GM12878 (cell line): ENCODE measurements at regions of chr9 and their contacts with region 1.

Region 1: DNA sequence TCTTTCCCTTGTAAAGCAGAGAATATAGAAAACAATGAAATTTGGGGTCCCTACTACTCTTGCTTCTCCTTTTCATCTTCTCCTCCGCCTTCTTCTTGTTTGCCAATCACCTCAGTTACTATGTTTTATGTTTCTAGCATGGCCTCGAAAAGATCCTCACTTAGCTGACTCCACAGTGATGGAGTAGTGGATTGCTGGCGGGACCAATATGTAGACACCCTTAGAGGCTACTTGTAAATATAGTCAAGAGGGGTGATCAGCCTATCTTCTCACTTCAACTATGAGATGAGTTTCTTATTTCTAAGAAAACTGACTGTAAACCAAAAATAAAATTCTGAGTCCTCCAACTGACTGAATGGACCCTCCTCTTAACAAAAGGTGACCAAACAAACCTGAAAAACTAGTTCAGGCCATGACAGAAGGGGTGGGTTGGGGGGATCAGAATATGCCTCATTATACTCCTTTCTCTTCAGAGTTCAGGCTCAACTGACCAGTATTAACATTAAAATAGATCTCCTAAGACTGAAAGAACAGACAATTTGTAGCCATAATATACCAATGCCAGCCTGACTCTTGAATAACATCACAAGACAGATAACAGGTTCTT is 829.0 kb downstream of the TLE4 start:
- DNase-seq: no peak
- ATAC-seq: no peak
- H3K4me3 ChIP-seq: no peak overlapping the region
- H3K27ac ChIP-seq: no peak overlapping the region
- H3K4me1 ChIP-seq: no peaks in the 10 kb centered on the region
- H3K27me3 ChIP-seq: no peaks in the 10 kb centered on the region
- CTCF ChIP-seq: no peak
- EP300 ChIP-seq: no peak
- POLR2A ChIP-seq: no peak
- RAD21 ChIP-seq: no peak

Region 2: DNA sequence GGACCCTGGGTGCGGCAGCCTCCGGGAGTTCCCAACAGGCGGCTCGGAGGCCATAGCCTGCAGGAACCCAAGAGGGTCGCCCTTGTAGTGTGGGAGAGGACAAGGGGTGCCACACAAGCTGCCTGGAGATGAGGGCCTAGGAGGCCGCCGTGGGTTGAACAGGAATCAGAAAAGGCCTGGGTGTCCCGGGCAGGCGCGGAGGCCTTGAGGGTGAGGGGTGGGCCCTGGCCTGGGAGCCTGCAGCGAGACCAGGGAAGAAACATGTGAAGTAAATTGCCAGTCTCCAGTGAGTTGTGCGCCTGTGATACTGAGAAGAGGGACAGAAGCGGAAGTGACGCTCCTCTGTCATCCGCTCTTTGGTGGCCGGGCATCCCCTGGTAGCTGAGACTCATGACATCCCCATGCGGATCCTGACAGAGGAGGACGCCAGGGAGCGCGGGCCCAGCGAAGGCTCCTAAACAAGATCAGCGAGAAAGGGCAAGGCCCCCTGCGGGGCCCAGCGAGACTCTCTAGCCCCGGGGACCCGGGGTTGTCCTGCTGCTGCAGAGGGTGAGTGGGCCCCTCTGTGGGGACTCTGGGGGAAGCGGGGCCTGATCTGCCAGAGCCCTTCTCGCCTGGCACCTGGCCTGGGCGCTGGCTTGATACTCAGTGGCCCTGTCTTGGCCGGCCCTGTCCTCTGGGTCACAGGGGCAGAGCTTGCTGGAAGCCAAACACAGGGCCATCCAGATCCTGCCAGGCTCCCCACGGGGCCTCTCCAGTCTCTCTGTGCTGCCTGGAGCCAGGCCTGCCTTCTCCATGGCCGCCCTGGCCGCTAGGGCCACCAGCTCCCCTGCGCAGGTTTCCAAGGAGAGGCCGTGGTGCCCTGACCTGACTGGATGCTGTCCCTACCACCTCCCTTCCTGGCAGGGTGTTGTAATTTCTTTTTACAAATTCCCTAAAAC is 40.5 kb before region 1 on chr9:
- CTCF ChIA-PET with region 1: no interaction called
- POLR2A ChIA-PET with region 1: no interaction called
- RAD21 ChIA-PET with region 1: no interaction called
- SMC1A ChIA-PET with region 1: interaction called, 4 read pairs
- in situ Hi-C with region 1: no loop called
- intact Hi-C with region 1: loop called (anchors 5 kb)
- DNase-seq: no peak
- ATAC-seq: no peak
- H3K4me3 ChIP-seq: no peak overlapping the region
- H3K27ac ChIP-seq: no peak overlapping the region
- H3K4me1 ChIP-seq: no peaks in the 10 kb centered on the region
- H3K27me3 ChIP-seq: no peaks in the 10 kb centered on the region
- CTCF ChIP-seq: no peak
- EP300 ChIP-seq: no peak
- POLR2A ChIP-seq: no peak
- RAD21 ChIP-seq: no peak

Region 3: GRCh38 chr9:80417211-80417773 is 16.6 kb after region 1 on chr9:
- CTCF ChIA-PET with region 1: no interaction called
- POLR2A ChIA-PET with region 1: no interaction called
- RAD21 ChIA-PET with region 1: no interaction called
- SMC1A ChIA-PET with region 1: no interaction called
- in situ Hi-C with region 1: no loop called
- intact Hi-C with region 1: no loop called
- DNase-seq: no peak
- ATAC-seq: no peak
- H3K4me3 ChIP-seq: no peak overlapping the region
- H3K27ac ChIP-seq: no peak overlapping the region
- H3K4me1 ChIP-seq: no peaks in the 10 kb centered on the region
- H3K27me3 ChIP-seq: no peaks in the 10 kb centered on the region
- CTCF ChIP-seq: no peak
- EP300 ChIP-seq: no peak
- POLR2A ChIP-seq: no peak
- RAD21 ChIP-seq: no peak

Region 4: DNA sequence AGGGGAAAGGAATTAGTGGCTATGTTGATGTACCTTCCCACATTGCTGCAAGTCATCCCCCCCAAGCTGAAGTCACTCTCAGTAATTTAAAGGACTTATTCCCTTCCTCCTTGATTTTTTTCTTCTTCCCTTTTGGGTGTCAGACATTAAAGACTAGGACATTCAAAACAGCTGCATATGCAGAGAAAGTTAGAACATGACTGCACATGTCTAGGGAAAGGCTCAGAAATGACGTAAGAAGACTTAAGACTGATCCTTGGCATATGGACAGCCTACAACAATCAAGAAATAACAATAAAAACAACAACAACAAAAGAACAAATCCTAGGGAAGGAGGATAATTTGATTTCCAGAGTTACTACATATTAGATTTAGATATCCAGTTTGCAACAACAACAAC is 168.5 kb after region 1 on chr9:
- CTCF ChIA-PET with region 1: no interaction called
- POLR2A ChIA-PET with region 1: no interaction called
- RAD21 ChIA-PET with region 1: no interaction called
- SMC1A ChIA-PET with region 1: no interaction called
- in situ Hi-C with region 1: no loop called
- intact Hi-C with region 1: no loop called
- DNase-seq: no peak
- ATAC-seq: no peak
- H3K4me3 ChIP-seq: no peak overlapping the region
- H3K27ac ChIP-seq: no peak overlapping the region
- H3K4me1 ChIP-seq: no peaks in the 10 kb centered on the region
- H3K27me3 ChIP-seq: no peaks in the 10 kb centered on the region
- CTCF ChIP-seq: no peak
- EP300 ChIP-seq: no peak
- POLR2A ChIP-seq: no peak
- RAD21 ChIP-seq: no peak